HCT116 (cell line): ENCODE measurements at regions of chr10 and their contacts with region 1.

Region 1: DNA sequence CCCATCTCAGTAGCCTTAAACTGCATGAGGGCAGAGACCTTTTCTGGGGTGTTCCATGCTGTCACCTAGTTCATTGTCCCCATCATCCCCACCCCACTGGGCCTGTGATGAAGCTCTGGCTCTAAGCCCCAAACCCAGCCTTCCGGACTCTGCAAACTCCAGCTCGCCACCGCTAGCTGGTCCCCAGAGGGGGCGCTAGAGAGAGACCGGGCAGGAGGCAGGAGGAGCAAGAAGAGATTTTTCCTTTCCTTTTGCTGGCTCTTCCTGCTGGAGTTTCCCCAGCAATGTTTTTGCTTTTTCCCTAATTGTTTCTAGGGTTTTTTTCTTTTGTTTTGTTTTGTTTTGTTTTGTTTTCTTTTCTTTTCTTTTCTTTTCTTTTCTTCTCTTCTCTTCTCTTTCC is 234.4 kb downstream of the TEX36 start:
- DNase-seq: peak; percentile 62
- ATAC-seq: peak; percentile 98
- H3K4me3 ChIP-seq: no peak overlapping the region
- H3K27ac ChIP-seq: no peak overlapping the region
- H3K4me1 ChIP-seq: no peaks in the 10 kb centered on the region
- H3K27me3 ChIP-seq: peaks cover 7% of the 10 kb centered on the region; the same call in 1 of the 2 replicates
- CTCF ChIP-seq: peak; percentile 78 to 100 (median 97); a peak in 5 of 6 replicates
- POLR2A ChIP-seq: no peak
- RAD21 ChIP-seq: peak; percentile 71

Region 2: GRCh38 chr10:125396676-125397075 is 51.9 kb before region 1 on chr10:
- CTCF ChIA-PET with region 1: no interaction called
- POLR2A ChIA-PET with region 1: no interaction called
- RAD21 ChIA-PET with region 1: no interaction called
- intact Hi-C with region 1: no loop called
- DNase-seq: no peak
- ATAC-seq: no peak
- H3K4me3 ChIP-seq: no peak overlapping the region
- H3K27ac ChIP-seq: no peak overlapping the region
- H3K4me1 ChIP-seq: no peaks in the 10 kb centered on the region
- H3K27me3 ChIP-seq: no peaks in the 10 kb centered on the region
- CTCF ChIP-seq: no peak
- POLR2A ChIP-seq: no peak
- RAD21 ChIP-seq: no peak

Region 3: GRCh38 chr10:125460326-125460725 is 11.7 kb after region 1 on chr10:
- CTCF ChIA-PET with region 1: interaction called, 17 read pairs
- POLR2A ChIA-PET with region 1: no interaction called
- RAD21 ChIA-PET with region 1: no interaction called
- intact Hi-C with region 1: no loop called
- DNase-seq: no peak
- ATAC-seq: no peak
- H3K4me3 ChIP-seq: no peak overlapping the region
- H3K27ac ChIP-seq: no peak overlapping the region
- H3K4me1 ChIP-seq: no peaks in the 10 kb centered on the region
- H3K27me3 ChIP-seq: peaks cover 74% of the 10 kb centered on the region
- CTCF ChIP-seq: no peak
- POLR2A ChIP-seq: no peak
- RAD21 ChIP-seq: no peak